Endothelial cell of umbilical vein (primary cell): ENCODE measurements at regions of chr13 and their contacts with region 1.

Region 1: GRCh38 chr13:29472332-29472961 is 123.0 kb downstream of the SLC7A1 start:
- DNase-seq: peak; percentile 57
- H3K4me3 ChIP-seq: no peak overlapping the region
- H3K27ac ChIP-seq: no peak overlapping the region
- H3K4me1 ChIP-seq: no peaks in the 10 kb centered on the region
- H3K27me3 ChIP-seq: peaks cover 6 to 17% of the 10 kb centered on the region in 2 experiments
- CTCF ChIP-seq: peak; percentile 96 to 98
- POLR2A ChIP-seq: no peak

Region 2: GRCh38 chr13:29454911-29455481 is 17.5 kb before region 1 on chr13:
- CTCF ChIA-PET with region 1: interaction called, 23 read pairs
- POLR2A ChIA-PET with region 1: no interaction called
- dilution Hi-C with region 1: no loop called
- intact Hi-C with region 1: no loop called
- DNase-seq: peak; percentile 24
- H3K4me3 ChIP-seq: no peak overlapping the region
- H3K27ac ChIP-seq: no peak overlapping the region
- H3K4me1 ChIP-seq: peaks cover 3% of the 10 kb centered on the region
- H3K27me3 ChIP-seq: peaks cover 3 to 6% of the 10 kb centered on the region in 2 experiments
- CTCF ChIP-seq: peak; percentile 51 to 71
- POLR2A ChIP-seq: no peak

Region 3: DNA sequence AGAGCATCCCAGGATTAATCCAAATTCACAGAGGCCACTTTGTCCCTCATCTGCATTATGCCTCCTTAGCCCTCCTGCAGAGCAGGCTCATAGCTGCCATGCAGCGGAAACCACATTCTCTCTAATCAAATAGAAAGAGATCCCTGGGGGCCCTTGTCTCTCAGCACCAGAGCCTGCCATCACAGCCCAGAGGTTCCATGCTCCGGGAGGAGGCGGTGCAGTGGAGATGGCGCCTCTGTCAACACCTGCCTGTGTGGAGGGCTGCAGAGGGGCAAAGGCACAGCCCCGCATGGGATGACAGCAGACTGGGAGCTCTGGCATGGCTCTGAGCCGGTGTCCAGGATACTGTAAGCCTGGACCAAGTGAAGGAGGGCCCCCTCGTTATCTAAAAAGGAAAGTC is 11.8 kb after region 1 on chr13:
- CTCF ChIA-PET with region 1: interaction called, 32 read pairs
- POLR2A ChIA-PET with region 1: no interaction called
- dilution Hi-C with region 1: no loop called
- intact Hi-C with region 1: no loop called
- DNase-seq: no peak
- H3K4me3 ChIP-seq: no peak overlapping the region
- H3K27ac ChIP-seq: no peak overlapping the region
- H3K4me1 ChIP-seq: no peaks in the 10 kb centered on the region
- H3K27me3 ChIP-seq: peaks cover 0 to 5% of the 10 kb centered on the region in 2 experiments
- CTCF ChIP-seq: no peak
- POLR2A ChIP-seq: no peak

Region 4: DNA sequence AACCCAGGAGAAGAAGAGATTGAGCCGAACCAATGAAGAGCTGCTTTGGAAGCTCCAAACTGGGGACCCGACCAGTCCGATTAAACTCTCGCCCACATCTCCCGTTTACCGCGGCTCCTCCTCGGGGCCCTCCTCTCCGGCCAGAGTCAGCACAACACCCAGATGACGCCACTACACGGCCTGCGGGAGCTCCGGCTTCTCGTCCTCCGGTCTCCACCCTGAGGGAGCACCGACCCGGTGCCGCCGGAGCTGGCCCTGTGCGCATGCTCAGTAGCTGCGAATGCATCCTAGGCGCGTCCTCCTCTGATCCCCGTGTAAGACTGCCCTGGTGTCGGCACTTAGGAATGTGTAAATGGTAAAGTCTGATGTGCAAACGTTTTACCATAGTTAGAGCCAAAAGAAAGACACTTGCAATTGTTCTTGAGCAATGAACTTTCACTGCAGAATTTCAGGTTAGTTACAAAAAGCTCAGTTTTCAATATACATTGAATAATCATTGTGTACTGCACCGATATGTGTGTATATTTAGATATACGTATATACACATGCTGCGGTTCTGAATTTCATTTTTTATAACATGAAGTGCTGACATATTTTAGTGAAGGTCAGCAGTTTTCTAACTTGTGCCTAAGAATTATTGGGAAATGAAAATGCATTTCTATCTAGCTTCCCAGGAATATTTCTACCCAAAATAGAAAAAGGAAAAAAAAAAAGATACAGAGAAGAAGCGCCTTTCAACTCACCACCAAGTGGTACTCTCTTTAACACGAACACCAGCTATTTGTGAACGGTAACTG is 30.8 kb after region 1 on chr13:
- CTCF ChIA-PET with region 1: interaction called, 18 read pairs
- POLR2A ChIA-PET with region 1: no interaction called
- dilution Hi-C with region 1: no loop called
- intact Hi-C with region 1: no loop called
- DNase-seq: peak; percentile 13
- H3K4me3 ChIP-seq: no peak overlapping the region
- H3K27ac ChIP-seq: no peak overlapping the region
- H3K4me1 ChIP-seq: no peaks in the 10 kb centered on the region
- H3K27me3 ChIP-seq: peaks cover 10 to 12% of the 10 kb centered on the region in 2 experiments
- CTCF ChIP-seq: no peak
- POLR2A ChIP-seq: no peak

Region 5: DNA sequence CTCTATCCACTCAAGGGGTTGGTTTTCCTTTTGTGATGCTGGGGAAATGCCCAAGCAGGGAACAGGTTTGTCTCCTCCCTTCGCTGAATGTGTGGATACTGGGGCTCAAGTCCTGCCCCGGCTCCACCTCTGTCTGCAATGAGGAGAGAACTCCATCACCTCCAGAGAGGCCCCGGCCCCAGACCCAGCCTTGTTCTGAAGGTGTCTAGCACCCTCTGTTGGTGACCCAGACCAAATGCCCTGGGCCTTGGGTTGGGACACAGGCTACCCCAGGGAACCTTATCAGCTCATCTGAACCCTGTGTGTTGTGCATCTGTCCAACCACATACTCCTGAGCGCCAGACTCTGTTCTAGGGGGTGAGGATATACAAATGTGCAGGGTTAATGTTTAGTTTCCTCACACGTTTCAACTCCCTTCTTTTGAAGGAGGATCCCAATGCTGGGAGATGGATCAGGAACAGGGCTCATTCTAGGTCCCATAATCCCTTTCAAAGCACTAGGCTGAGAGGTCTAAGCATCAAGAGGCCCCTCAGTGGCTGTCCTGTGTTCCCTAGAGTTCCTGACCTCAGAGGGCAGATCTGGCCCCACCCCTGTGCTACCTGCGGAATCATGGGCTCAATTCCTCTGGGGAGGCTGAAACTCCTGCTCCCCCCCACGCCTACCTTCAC is 235.6 kb after region 1 on chr13:
- CTCF ChIA-PET with region 1: interaction called, 50 read pairs
- POLR2A ChIA-PET with region 1: no interaction called
- dilution Hi-C with region 1: loop called (anchors 25 kb)
- intact Hi-C with region 1: loop called (anchors 1 kb)
- DNase-seq: peak; percentile 46
- H3K4me3 ChIP-seq: no peak overlapping the region
- H3K27ac ChIP-seq: no peak overlapping the region
- H3K4me1 ChIP-seq: peaks cover 5% of the 10 kb centered on the region
- H3K27me3 ChIP-seq: peaks cover 11 to 14% of the 10 kb centered on the region in 2 experiments
- CTCF ChIP-seq: peak; percentile 80 to 89
- POLR2A ChIP-seq: no peak

Region 6: GRCh38 chr13:29713839-29714238 is 241.4 kb after region 1 on chr13:
- CTCF ChIA-PET with region 1: interaction called, 50 read pairs
- POLR2A ChIA-PET with region 1: no interaction called
- dilution Hi-C with region 1: loop called (anchors 25 kb)
- intact Hi-C with region 1: no loop called
- DNase-seq: peak; percentile 22
- H3K4me3 ChIP-seq: no peak overlapping the region
- H3K27ac ChIP-seq: no peak overlapping the region
- H3K4me1 ChIP-seq: no peaks in the 10 kb centered on the region
- H3K27me3 ChIP-seq: peaks cover 19 to 22% of the 10 kb centered on the region in 2 experiments
- CTCF ChIP-seq: peak; percentile 55 to 76
- POLR2A ChIP-seq: no peak

Region 7: DNA sequence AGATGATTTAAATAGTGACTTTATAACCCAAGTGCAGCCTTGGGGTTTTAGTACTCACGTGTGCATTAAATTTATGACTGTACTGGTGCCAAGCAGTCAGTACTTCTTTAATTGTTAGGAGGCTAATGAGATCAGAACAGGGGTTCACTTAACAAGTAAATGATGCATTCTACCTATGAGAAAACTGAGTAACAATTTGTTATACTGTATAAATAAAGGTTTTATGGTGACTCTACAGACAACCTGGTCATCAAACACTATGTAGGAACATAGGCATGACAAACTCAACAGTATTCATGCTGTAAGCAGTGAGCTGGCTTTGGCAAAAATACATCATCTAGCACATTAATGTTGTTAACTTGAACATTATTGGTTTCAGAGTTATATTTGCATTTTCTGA is 302.4 kb after region 1 on chr13:
- CTCF ChIA-PET with region 1: no interaction called
- POLR2A ChIA-PET with region 1: no interaction called
- dilution Hi-C with region 1: no loop called
- intact Hi-C with region 1: no loop called
- DNase-seq: no peak
- H3K4me3 ChIP-seq: no peak overlapping the region
- H3K27ac ChIP-seq: no peak overlapping the region
- H3K4me1 ChIP-seq: no peaks in the 10 kb centered on the region
- H3K27me3 ChIP-seq: no peaks in the 10 kb centered on the region
- CTCF ChIP-seq: no peak
- POLR2A ChIP-seq: no peak